ENCODE measurements at regions of chr11 and their contacts with region 1.

Region 1: GRCh38 chr11:64652586-64653387 is 61.8 kb downstream of the SLC22A12 start:
- DNase-seq: peak; percentile 51 to 80 (median 68)
- ATAC-seq: peak; percentile 87
- H3K4me3 ChIP-seq: no peak overlapping the region
- H3K4me3 Mint-ChIP-seq: no peak overlapping the region
- H3K27ac ChIP-seq: no peak overlapping the region
- H3K27ac Mint-ChIP-seq: no peak overlapping the region
- H3K4me1 ChIP-seq: peaks cover 14% of the 10 kb centered on the region
- H3K4me1 Mint-ChIP-seq: no peaks in the 10 kb centered on the region
- H3K27me3 ChIP-seq: peaks cover 0 to 4% of the 10 kb centered on the region in 2 experiments
- H3K27me3 Mint-ChIP-seq: peaks cover 13% of the 10 kb centered on the region
- CTCF ChIP-seq: peak; percentile 70

Region 2: DNA sequence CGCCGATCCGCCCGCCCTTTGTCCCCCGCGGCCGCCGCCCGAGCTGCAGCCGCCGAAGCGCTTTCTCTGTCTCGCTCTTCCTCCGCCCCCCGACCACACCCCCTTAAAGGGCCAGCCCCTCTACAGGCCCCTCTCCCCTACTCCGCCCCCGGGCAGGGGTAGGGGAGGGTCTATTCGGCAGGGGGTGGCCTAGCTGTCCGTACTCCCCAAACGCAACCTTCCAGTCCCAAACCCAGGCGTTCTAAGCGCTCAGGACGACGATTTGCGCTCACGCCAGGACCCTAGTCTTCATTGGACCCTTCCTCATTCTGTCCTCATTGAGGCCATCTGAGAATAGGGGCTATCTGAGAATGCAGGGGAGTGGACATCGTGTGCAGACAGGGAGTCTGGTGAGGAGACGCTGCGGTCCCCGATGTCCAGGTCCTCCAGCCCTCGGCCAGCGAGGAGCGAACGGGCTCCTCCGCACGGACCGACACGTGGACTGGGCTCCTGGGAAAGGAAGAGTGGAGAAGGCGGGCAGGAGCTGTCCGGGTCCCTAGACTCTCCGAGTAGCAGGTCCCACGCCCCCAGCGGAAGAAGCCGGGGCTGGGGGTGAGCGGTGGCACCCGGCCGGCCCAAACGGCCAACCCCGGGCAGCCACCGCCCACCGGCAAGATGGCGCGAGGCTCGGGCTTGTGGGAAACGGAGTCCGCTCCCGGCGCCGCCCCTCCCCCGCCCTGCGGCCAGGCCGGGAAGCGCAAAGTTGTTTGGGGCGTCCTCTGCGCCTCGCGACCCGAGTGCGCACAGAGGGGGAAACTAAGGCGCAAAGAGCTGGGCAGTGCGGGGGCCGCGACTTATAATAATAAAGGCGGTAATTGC is 405.7 kb before region 1 on chr11 and contains the start of gene PPP1R14B:
- CTCF ChIA-PET with region 1: no interaction called
- POLR2A ChIA-PET with region 1: no interaction called
- intact Hi-C with region 1: loop called in 1 of 2 experiments (anchors 10 kb)
- DNase-seq: peak; percentile 60 to 89 (median 76)
- ATAC-seq: peak; percentile 63
- H3K4me3 ChIP-seq: peak within 1 kb of the TSS; percentile 90
- H3K4me3 Mint-ChIP-seq: peak within 1 kb of the TSS; percentile 94
- H3K27ac ChIP-seq: peak within 1 kb of the TSS; percentile 48 to 57
- H3K27ac Mint-ChIP-seq: peak within 1 kb of the TSS; percentile 82
- H3K4me1 ChIP-seq: peaks cover 61% of the 10 kb centered on the region
- H3K4me1 Mint-ChIP-seq: peaks cover 41% of the 10 kb centered on the region
- H3K27me3 ChIP-seq: no peaks in the 10 kb centered on the region
- H3K27me3 Mint-ChIP-seq: no peaks in the 10 kb centered on the region
- CTCF ChIP-seq: no peak
- total RNA-seq, gene PPP1R14B: 17.1 to 21.0 TPM

Region 3: DNA sequence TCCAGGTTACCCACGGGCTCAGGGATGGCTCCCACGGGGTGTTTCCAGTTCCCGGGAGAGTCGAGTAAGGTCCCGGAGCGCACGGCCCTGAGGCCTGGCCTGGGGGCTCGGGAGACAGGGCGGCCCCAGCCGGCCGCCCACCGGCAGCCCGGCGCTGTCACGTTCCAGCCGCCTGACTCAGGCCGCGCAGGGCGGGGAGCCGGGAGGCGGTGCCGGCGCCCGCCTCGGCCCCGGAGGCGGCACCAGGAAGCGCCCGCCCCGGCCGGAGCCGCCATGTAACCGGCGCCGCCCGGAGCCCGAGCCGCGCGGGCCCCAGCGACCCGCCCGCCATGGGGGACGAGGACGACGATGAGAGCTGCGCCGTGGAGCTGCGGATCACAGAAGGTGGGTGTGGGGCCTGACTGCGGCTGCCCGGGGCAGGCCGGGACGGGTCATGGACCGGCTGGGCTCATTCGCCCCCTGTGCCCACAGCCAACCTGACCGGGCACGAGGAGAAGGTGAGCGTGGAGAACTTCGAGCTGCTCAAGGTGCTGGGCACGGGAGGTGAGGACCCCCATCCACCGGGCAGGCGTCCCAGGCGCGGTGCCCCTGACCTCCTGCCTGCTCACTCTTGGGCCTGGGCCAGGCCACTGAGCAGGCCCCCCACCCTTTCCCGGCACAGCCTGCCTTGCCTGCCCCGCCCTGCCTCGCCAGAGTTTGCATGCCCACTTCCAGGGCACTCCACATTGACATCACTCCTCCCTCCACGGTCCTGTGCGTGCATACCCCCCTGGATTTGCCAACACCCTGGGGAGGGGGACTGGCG is 293.7 kb before region 1 on chr11 and contains the start of gene RPS6KA4:
- CTCF ChIA-PET with region 1: no interaction called
- POLR2A ChIA-PET with region 1: no interaction called
- intact Hi-C with region 1: loop called in 1 of 2 experiments (anchors 10 kb)
- DNase-seq: peak in 8 of 14 experiments; percentile 35 to 79 (median 58)
- ATAC-seq: peak; percentile 69
- H3K4me3 ChIP-seq: peak within 1 kb of the TSS; percentile 88
- H3K4me3 Mint-ChIP-seq: peak within 1 kb of the TSS; percentile 93
- H3K27ac ChIP-seq: peak within 1 kb of the TSS in 1 of 2 donors; percentile 22
- H3K27ac Mint-ChIP-seq: peak within 1 kb of the TSS; percentile 5
- H3K4me1 ChIP-seq: peaks cover 38% of the 10 kb centered on the region
- H3K4me1 Mint-ChIP-seq: peaks cover 25% of the 10 kb centered on the region
- H3K27me3 ChIP-seq: no peaks in the 10 kb centered on the region
- H3K27me3 Mint-ChIP-seq: no peaks in the 10 kb centered on the region
- CTCF ChIP-seq: no peak
- total RNA-seq, gene RPS6KA4: 7.3 to 9.2 TPM

Region 4: DNA sequence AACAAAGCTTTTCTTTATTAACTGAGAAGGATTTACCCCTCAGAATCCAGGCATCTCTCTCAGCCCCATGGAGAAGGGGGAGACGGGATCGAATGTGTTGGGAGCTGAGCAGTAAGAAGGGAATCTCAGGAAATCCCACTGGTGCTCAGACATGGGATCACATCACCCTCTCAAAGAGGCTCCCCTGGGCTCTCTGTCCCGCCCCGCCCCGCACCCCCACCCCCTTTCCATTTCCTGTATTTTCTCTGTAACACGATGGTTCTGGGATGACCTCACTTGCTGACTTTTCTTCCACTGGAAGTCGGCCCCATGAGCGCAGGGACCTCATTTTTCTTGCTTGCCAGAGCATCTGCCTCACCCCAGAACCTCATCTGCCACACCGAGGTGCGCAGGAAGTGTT is 193.8 kb before region 1 on chr11:
- CTCF ChIA-PET with region 1: no interaction called
- POLR2A ChIA-PET with region 1: no interaction called
- intact Hi-C with region 1: no loop called
- DNase-seq: peak in 1 of 14 experiments; percentile 17
- ATAC-seq: no peak
- H3K4me3 ChIP-seq: no peak overlapping the region
- H3K4me3 Mint-ChIP-seq: no peak overlapping the region
- H3K27ac ChIP-seq: no peak overlapping the region
- H3K27ac Mint-ChIP-seq: no peak overlapping the region
- H3K4me1 ChIP-seq: no peaks in the 10 kb centered on the region
- H3K4me1 Mint-ChIP-seq: no peaks in the 10 kb centered on the region
- H3K27me3 ChIP-seq: no peaks in the 10 kb centered on the region
- H3K27me3 Mint-ChIP-seq: no peaks in the 10 kb centered on the region
- CTCF ChIP-seq: no peak

Region 5: GRCh38 chr11:64516226-64516625 is 136.6 kb before region 1 on chr11:
- CTCF ChIA-PET with region 1: no interaction called
- POLR2A ChIA-PET with region 1: no interaction called
- intact Hi-C with region 1: no loop called
- DNase-seq: peak in 2 of 14 experiments; percentile 15 to 41
- ATAC-seq: no peak
- H3K4me3 ChIP-seq: no peak overlapping the region
- H3K4me3 Mint-ChIP-seq: no peak overlapping the region
- H3K27ac ChIP-seq: no peak overlapping the region
- H3K27ac Mint-ChIP-seq: no peak overlapping the region
- H3K4me1 ChIP-seq: no peaks in the 10 kb centered on the region
- H3K4me1 Mint-ChIP-seq: no peaks in the 10 kb centered on the region
- H3K27me3 ChIP-seq: no peaks in the 10 kb centered on the region
- H3K27me3 Mint-ChIP-seq: peaks cover 37% of the 10 kb centered on the region
- CTCF ChIP-seq: no peak

Region 6: DNA sequence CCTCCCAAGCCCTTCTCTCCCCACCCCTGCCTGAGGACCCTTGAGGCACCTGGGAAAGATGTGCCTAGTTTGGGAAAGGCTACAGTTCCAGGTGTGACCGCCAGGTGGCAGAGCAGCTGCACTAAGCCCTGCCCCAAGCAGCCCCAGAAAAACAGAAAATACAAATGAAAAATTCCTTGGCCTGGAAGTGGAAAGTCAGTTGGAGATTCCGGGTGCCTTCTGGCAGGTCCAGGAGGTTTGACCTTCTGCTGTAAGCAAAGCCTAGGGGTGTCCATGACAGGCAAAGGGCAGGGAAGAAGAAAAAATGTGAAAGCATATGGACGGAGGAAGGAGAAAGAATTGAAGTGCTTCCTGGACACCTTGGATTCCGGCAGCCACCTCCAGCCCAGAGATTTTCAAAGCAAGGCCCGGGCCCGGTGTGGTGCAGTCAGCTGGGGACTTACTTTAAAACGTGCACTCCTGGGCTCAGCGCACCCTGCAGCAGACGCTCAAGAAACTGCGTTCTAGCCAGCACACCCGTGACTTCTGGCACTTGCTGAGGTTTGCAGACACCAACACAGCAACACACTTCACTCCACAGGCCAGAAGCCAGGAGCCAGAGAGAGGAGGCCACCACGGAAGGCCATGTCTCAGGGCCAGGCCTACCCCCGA is 99.1 kb before region 1 on chr11:
- CTCF ChIA-PET with region 1: interaction called, 5 read pairs
- POLR2A ChIA-PET with region 1: no interaction called
- intact Hi-C with region 1: loop called (anchors 1 to 5 kb)
- DNase-seq: peak; percentile 27 to 71 (median 46)
- ATAC-seq: peak; percentile 48
- H3K4me3 ChIP-seq: no peak overlapping the region
- H3K4me3 Mint-ChIP-seq: no peak overlapping the region
- H3K27ac ChIP-seq: no peak overlapping the region
- H3K27ac Mint-ChIP-seq: no peak overlapping the region
- H3K4me1 ChIP-seq: no peaks in the 10 kb centered on the region
- H3K4me1 Mint-ChIP-seq: no peaks in the 10 kb centered on the region
- H3K27me3 ChIP-seq: no peaks in the 10 kb centered on the region
- H3K27me3 Mint-ChIP-seq: no peaks in the 10 kb centered on the region
- CTCF ChIP-seq: peak; percentile 93

Region 7: GRCh38 chr11:64672875-64673274 is 20.1 kb after region 1 on chr11:
- CTCF ChIA-PET with region 1: no interaction called
- POLR2A ChIA-PET with region 1: no interaction called
- intact Hi-C with region 1: no loop called
- DNase-seq: no peak
- ATAC-seq: no peak
- H3K4me3 ChIP-seq: no peak overlapping the region
- H3K4me3 Mint-ChIP-seq: no peak overlapping the region
- H3K27ac ChIP-seq: no peak overlapping the region
- H3K27ac Mint-ChIP-seq: no peak overlapping the region
- H3K4me1 ChIP-seq: no peaks in the 10 kb centered on the region
- H3K4me1 Mint-ChIP-seq: no peaks in the 10 kb centered on the region
- H3K27me3 ChIP-seq: peaks cover 18 to 31% of the 10 kb centered on the region in 2 experiments
- H3K27me3 Mint-ChIP-seq: peaks cover 81% of the 10 kb centered on the region
- CTCF ChIP-seq: no peak

Region 8: GRCh38 chr11:65111744-65112414 is 459.1 kb after region 1 on chr11 and contains the start of gene TM7SF2:
- CTCF ChIA-PET with region 1: no interaction called
- POLR2A ChIA-PET with region 1: no interaction called
- intact Hi-C with region 1: no loop called
- DNase-seq: peak; percentile 88 to 98 (median 94)
- ATAC-seq: peak; percentile 75
- H3K4me3 ChIP-seq: peak within 1 kb of the TSS; percentile 81
- H3K4me3 Mint-ChIP-seq: peak within 1 kb of the TSS; percentile 95
- H3K27ac ChIP-seq: peak within 1 kb of the TSS; percentile 62 to 68
- H3K27ac Mint-ChIP-seq: peak within 1 kb of the TSS; percentile 92
- H3K4me1 ChIP-seq: peaks cover 63% of the 10 kb centered on the region
- H3K4me1 Mint-ChIP-seq: peaks cover 36% of the 10 kb centered on the region
- H3K27me3 ChIP-seq: no peaks in the 10 kb centered on the region
- H3K27me3 Mint-ChIP-seq: no peaks in the 10 kb centered on the region
- CTCF ChIP-seq: no peak
- total RNA-seq, gene TM7SF2: 20.0 to 20.4 TPM